Ascending aorta (tissue), 2 donors: ENCODE measurements at regions of chr3 and their contacts with region 1.

Region 1: DNA sequence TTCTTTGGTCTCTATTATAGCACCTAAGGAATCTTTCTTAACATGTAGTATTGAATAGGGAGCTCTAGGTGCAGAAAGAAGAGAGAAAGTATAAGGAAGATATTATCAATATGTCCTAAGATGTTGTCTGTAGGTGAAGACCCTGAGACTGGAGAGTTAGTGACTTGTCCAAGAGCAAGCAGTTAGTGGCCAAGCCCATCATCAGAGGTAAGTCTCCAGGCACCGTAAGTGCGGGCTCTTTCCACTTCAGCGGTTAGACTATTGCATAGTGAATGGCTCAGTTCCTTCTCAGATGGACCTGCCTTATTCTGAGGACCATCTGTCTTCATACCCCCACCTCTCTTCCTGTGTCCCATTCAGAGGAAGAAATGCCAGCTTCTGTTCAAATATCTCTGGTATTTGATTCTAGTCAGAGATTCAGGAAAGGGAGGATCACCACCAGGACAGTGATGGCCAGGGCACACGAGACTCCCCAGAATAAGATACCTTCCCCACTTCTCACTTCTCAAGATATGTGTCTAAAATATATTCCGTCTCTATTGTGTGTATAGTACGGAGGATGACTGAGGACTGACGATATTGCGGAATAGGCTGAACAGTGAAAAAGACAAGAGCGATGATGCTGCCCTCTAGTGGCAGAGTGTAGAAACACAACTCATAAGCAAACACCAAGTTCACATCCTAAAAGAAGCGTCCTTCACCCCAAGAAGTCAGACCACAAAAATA is 19.1 kb upstream of the ADGRG7 start:
- DNase-seq: peak in 1 of 2 donors; percentile 70
- H3K4me3 ChIP-seq: peak overlapping the region in 1 of 2 donors; percentile 27
- H3K27ac ChIP-seq: no peak overlapping the region
- H3K4me1 ChIP-seq: no peaks in the 10 kb centered on the region
- H3K27me3 ChIP-seq: no peaks in the 10 kb centered on the region
- CTCF ChIP-seq: peak; percentile 79 to 93 (median 86)

Region 2: DNA sequence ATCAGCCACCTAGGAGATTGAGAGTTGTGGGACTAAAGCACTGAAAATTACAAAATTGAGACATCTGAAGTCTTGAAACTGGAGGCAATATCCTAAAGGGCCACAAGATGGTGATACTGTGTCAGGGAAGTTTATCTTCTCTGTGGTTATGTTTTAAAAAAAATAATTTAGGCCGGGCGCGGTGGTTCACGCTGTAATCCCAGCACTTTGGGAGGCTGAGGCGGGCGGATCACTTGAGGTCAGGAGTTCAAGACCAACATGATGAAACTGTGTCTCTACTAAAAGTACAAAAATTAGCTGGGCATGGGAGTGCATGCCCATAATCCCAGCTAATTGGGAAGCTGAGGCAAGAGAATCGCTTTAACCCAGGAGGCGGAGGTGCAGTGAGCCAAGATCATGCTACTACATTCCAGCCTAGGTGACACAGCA is 273.6 kb before region 1 on chr3:
- intact Hi-C with region 1: loop called (anchors 1 kb)
- DNase-seq: no peak
- H3K4me3 ChIP-seq: no peak overlapping the region
- H3K27ac ChIP-seq: no peak overlapping the region
- H3K4me1 ChIP-seq: peaks cover 0 to 3% of the 10 kb centered on the region in 2 donors
- H3K27me3 ChIP-seq: no peaks in the 10 kb centered on the region
- CTCF ChIP-seq: peak; percentile 62 to 68 (median 63)

Region 3: DNA sequence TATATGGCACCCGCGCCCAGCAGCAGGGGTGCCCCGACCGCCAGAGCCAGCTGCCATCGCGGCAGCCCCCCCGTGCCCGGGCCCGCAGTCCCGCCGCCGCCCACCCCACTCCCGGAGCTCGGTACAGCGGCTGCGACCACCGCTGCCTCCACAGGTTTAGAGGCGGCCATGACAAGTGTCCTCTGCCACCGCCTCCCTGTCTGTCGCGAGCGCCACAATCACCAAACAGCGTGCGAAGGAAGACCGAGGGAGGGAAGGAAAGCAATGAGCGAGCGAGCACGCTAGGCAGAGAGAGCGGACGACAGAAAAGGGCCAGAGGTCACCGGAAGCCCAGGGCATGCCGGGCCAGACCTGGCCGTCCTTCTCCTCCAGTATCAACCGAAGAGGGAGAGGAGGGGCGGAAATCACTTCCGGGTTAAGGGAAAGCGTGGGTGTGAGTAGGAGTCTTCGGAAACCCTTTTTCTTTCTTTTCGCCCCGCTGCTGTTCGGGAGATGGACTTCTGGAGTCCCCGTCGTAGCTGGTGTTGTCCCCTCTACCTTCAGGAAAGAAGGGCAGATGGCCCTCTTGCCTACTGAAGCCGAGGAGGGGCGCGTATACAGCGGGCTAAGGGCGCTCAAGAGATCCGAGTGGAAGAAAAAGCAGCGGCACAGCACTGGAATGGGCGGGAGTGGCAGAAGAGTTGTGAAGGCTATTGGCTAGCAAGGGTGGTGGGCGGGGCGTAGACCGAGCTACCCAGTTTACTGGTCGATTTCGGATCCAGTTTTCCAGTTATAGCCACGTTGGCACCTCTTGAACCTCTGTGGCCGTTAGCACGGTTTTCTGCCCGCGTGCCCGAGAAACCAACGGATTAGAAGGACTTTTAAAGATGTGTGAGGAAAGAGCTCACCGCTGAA is 189.2 kb before region 1 on chr3 and contains the starts of genes LNP1 and TOMM70:
- intact Hi-C with region 1: loop called (anchors 1 kb)
- DNase-seq: peak; percentile 92 to 99
- H3K4me3 ChIP-seq: peak within 1 kb of the TSS; percentile 89 to 92
- H3K27ac ChIP-seq: peak within 1 kb of the TSS; percentile 90 to 91
- H3K4me1 ChIP-seq: peaks cover 10 to 30% of the 10 kb centered on the region in 2 donors
- H3K27me3 ChIP-seq: no peaks in the 10 kb centered on the region
- CTCF ChIP-seq: no peak
- total RNA-seq, gene LNP1: 1.3 TPM
- total RNA-seq, gene TOMM70: 16.4 TPM

Region 4: DNA sequence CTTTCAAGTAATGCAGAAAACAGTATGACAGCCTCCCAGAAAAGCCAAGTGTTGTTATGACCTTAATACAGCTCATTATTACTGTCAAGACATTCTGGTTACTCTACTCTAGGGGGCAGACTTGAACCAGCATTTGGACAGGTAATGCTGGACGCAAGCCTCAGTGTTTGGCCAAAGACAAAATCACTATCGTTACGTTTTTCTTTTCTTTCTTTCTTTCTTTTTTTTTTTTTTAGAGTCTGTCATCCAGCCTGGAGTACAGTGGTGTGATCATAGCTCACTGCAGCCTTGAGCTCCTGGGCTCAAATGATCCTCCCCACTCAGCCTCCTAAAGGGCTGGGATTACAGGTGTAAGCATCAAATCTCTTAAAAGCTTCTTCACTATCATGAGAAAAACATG is 127.3 kb before region 1 on chr3:
- intact Hi-C with region 1: loop called (anchors 1 kb)
- DNase-seq: no peak
- H3K4me3 ChIP-seq: no peak overlapping the region
- H3K27ac ChIP-seq: no peak overlapping the region
- H3K4me1 ChIP-seq: no peaks in the 10 kb centered on the region
- H3K27me3 ChIP-seq: no peaks in the 10 kb centered on the region
- CTCF ChIP-seq: peak; percentile 50 to 64 (median 55)

Region 5: GRCh38 chr3:100521439-100521845 is 68.8 kb before region 1 on chr3:
- intact Hi-C with region 1: no loop called
- DNase-seq: no peak
- H3K4me3 ChIP-seq: no peak overlapping the region
- H3K27ac ChIP-seq: no peak overlapping the region
- H3K4me1 ChIP-seq: no peaks in the 10 kb centered on the region
- H3K27me3 ChIP-seq: no peaks in the 10 kb centered on the region
- CTCF ChIP-seq: no peak

Region 6: GRCh38 chr3:100548053-100548452 is 42.2 kb before region 1 on chr3:
- intact Hi-C with region 1: no loop called
- DNase-seq: no peak
- H3K4me3 ChIP-seq: no peak overlapping the region
- H3K27ac ChIP-seq: no peak overlapping the region
- H3K4me1 ChIP-seq: no peaks in the 10 kb centered on the region
- H3K27me3 ChIP-seq: no peaks in the 10 kb centered on the region
- CTCF ChIP-seq: no peak

Region 7: DNA sequence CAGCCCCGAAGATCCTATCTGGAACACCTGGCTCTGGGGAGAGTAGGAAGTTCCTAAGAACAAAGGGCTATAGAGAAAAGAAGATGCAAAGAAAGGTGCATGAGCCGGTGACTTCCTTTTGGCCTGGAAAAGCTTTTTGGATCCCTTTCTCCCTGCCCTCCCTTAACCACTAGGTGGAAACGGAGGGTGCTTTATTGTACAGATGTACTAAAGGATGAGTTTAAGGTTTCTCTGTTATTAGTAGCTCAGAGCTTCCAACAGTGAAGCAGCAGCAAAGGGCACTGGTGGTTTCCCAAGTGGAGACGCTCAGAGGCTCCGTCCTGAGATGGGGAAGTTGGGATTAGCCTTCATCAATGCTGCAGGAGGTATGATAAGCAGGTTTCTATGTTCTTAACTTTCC is 13.2 kb after region 1 on chr3:
- intact Hi-C with region 1: no loop called
- DNase-seq: no peak
- H3K4me3 ChIP-seq: peak overlapping the region in 1 of 2 donors; percentile 12
- H3K27ac ChIP-seq: no peak overlapping the region
- H3K4me1 ChIP-seq: no peaks in the 10 kb centered on the region
- H3K27me3 ChIP-seq: no peaks in the 10 kb centered on the region
- CTCF ChIP-seq: peak in 2 of 3 experiments; percentile 9 to 26